ENCODE measurements at regions of chr10 and their contacts with region 1.

Region 1: DNA sequence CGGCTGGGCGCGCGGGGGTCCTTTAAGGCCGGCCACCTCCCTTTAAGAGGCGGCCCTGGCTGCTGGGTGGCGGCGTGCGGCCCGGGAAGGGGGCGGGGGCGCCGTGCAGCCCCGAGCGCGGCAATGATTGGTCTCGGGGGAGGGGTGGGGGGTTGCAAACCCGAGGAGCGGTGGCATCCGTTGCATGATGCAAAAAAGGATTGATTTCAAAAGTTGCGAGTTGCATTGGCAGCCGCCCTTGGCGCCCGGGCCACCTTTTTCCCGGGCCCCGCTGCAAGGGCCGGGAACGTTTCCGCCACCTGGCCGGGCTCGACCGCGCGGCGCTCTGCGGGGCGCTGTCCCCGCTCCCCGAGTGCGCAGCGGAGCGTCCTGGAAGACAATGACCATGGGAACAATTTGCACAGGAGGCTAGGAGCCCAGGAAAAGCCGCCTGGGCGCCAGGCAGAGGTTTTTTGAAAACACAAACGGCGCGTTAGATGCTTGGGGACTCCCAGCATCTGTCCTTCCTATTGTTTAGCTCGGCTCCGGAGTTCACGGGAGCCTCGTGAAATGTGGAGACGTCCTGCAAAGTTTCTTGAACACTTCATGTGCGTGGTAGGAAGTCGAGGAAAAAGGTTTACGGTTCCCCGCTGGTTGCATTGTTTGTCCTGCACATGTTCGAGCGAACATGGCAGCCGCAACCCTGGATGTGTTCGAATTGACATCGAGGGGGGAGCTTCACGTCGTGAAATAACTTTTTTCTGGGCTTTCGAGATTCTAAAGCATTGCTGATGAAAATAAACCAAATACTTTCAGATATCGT is at the start of gene SEPHS1:
- DNase-seq: peak; percentile 81
- ATAC-seq: peak; percentile 25
- H3K4me3 Mint-ChIP-seq: peak within 1 kb of the TSS; percentile 94
- H3K27ac Mint-ChIP-seq: peak within 1 kb of the TSS; percentile 100
- H3K4me1 Mint-ChIP-seq: peaks cover 71% of the 10 kb centered on the region
- H3K27me3 Mint-ChIP-seq: no peaks in the 10 kb centered on the region; the same call in 1 of the 2 replicates
- CTCF ChIP-seq: no peak
- total RNA-seq, gene SEPHS1: 501 to 509 TPM (median 501 TPM) in 3 replicates

Region 2: GRCh38 chr10:13160934-13161856 is 187.2 kb before region 1 on chr10 and contains the start of gene MCM10:
- CTCF ChIA-PET with region 1: interaction called, 16 read pairs
- POLR2A ChIA-PET with region 1: interaction called, 4 read pairs
- DNase-seq: peak; percentile 99
- ATAC-seq: peak; percentile 99
- H3K4me3 Mint-ChIP-seq: peak within 1 kb of the TSS; percentile 79
- H3K27ac Mint-ChIP-seq: peak within 1 kb of the TSS; percentile 36
- H3K4me1 Mint-ChIP-seq: peaks cover 10% of the 10 kb centered on the region
- H3K27me3 Mint-ChIP-seq: no peaks in the 10 kb centered on the region; the same call in 1 of the 2 replicates
- CTCF ChIP-seq: peak; percentile 84
- total RNA-seq, gene MCM10: 40.7 to 44.3 TPM (median 42.4 TPM) in 3 replicates

Region 3: GRCh38 chr10:13271552-13272163 is 76.8 kb before region 1 on chr10:
- CTCF ChIA-PET with region 1: interaction called, 14 read pairs
- POLR2A ChIA-PET with region 1: interaction called, 3 read pairs
- DNase-seq: peak; percentile 86
- ATAC-seq: peak; percentile 96
- H3K4me3 Mint-ChIP-seq: no peak overlapping the region
- H3K27ac Mint-ChIP-seq: peak overlapping the region; percentile 96
- H3K4me1 Mint-ChIP-seq: peaks cover 38% of the 10 kb centered on the region
- H3K27me3 Mint-ChIP-seq: no peaks in the 10 kb centered on the region
- CTCF ChIP-seq: peak; percentile 41; the same call in 1 of the 2 replicates

Region 4: DNA sequence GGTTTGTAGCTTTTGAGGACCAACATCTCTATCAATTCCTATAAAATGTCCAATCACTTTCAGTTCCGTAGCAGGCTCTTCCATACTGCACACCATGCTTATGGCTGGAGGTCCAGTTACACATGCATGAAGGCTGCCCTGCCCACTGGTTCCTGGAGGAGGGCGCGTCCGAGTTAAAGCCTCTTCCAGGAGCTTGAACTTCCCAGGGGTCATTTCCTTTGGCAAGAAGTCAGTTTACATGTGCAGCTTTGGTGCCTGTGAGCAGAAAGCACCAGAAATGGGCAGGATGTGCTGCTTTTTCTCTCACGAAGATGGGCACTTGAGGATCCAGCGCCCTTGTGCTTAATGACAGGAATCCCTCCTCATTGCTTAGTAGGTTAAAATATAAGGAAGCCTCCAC is 30.9 kb before region 1 on chr10:
- CTCF ChIA-PET with region 1: interaction called, 12 read pairs
- POLR2A ChIA-PET with region 1: interaction called, 12 read pairs
- DNase-seq: no peak
- ATAC-seq: peak; percentile 14; the same call in 1 of the 2 replicates
- H3K4me3 Mint-ChIP-seq: no peak overlapping the region
- H3K27ac Mint-ChIP-seq: peak overlapping the region; percentile 85
- H3K4me1 Mint-ChIP-seq: peaks cover 20% of the 10 kb centered on the region
- H3K27me3 Mint-ChIP-seq: no peaks in the 10 kb centered on the region
- CTCF ChIP-seq: no peak

Region 5: GRCh38 chr10:13365243-13365642 is 16.8 kb after region 1 on chr10:
- CTCF ChIA-PET with region 1: interaction called, 15 read pairs
- POLR2A ChIA-PET with region 1: interaction called, 7 read pairs
- DNase-seq: no peak
- ATAC-seq: no peak
- H3K4me3 Mint-ChIP-seq: no peak overlapping the region
- H3K27ac Mint-ChIP-seq: no peak overlapping the region
- H3K4me1 Mint-ChIP-seq: peaks cover 17% of the 10 kb centered on the region
- H3K27me3 Mint-ChIP-seq: no peaks in the 10 kb centered on the region
- CTCF ChIP-seq: no peak

Region 6: DNA sequence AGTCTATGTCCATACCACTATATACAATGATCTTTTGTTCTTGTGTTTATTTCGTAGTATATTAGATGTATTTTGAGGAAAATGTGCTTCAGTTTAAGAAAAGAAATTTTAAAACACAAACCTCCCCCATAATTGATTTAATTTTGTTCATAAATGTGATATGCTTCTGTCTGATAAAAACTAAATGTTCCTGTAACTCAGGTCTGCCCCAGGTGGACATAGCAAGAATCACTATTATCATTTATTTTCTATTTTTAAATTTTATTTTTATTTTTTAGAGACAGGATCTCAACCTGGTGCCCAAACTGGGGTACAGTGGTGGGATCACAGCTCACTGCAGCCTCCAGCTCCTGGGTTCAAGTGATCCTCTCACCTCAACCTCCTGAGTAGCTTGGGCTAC is 137.2 kb after region 1 on chr10:
- CTCF ChIA-PET with region 1: no interaction called
- POLR2A ChIA-PET with region 1: no interaction called
- DNase-seq: no peak
- ATAC-seq: no peak
- H3K4me3 Mint-ChIP-seq: no peak overlapping the region
- H3K27ac Mint-ChIP-seq: no peak overlapping the region
- H3K4me1 Mint-ChIP-seq: peaks cover 7% of the 10 kb centered on the region
- H3K27me3 Mint-ChIP-seq: no peaks in the 10 kb centered on the region
- CTCF ChIP-seq: no peak